Common myeloid progenitor, CD34-positive (primary cell): ENCODE measurements at regions of chr12 and their contacts with region 1.

Region 1: GRCh38 chr12:111396726-111397445 is 8.8 kb upstream of the SH2B3 start:
- DNase-seq: peak; percentile 90 to 94 (median 93)
- H3K4me3 ChIP-seq: peak overlapping the region in 6 of 7 experiments; percentile 26 to 67 (median 48)
- H3K27ac ChIP-seq: peak overlapping the region in 1 of 2 experiments; percentile 34
- H3K4me1 ChIP-seq: peaks cover 2 to 42% (median 31%) of the 10 kb centered on the region in 4 experiments
- H3K27me3 ChIP-seq: no peaks in the 10 kb centered on the region

Region 2: DNA sequence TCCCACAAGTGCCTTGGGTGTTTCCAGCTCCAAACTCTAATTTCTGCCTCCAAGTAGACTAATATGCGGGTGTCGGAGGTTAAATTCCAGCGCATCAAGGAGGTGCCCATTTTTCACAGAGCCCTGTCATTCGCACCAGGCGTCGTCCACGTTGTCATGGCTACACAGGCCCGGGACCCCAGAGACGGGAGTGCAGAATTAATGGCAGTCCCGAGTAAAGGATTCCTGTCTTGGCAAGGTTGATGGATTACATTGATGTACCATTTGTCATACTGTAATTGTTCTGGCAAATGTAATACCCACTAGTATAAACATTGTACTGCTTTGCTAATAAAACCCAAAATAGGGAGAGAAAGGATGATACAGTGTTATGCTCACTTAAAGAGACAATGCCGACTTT is 253.6 kb before region 1 on chr12:
- CTCF ChIA-PET with region 1: no interaction called
- POLR2A ChIA-PET with region 1: no interaction called
- DNase-seq: no peak
- H3K4me3 ChIP-seq: no peak overlapping the region
- H3K27ac ChIP-seq: no peak overlapping the region
- H3K4me1 ChIP-seq: no peaks in the 10 kb centered on the region
- H3K27me3 ChIP-seq: peaks cover 0 to 3% (median 0%) of the 10 kb centered on the region in 5 experiments

Region 3: GRCh38 chr12:111384596-111384995 is 12.3 kb before region 1 on chr12:
- CTCF ChIA-PET with region 1: interaction called, 29 read pairs
- POLR2A ChIA-PET with region 1: no interaction called
- DNase-seq: no peak
- H3K4me3 ChIP-seq: no peak overlapping the region
- H3K27ac ChIP-seq: no peak overlapping the region
- H3K4me1 ChIP-seq: no peaks in the 10 kb centered on the region
- H3K27me3 ChIP-seq: no peaks in the 10 kb centered on the region

Region 4: GRCh38 chr12:111434680-111435338 is 37.9 kb after region 1 on chr12:
- CTCF ChIA-PET with region 1: interaction called, 820 read pairs
- POLR2A ChIA-PET with region 1: interaction called, 5 read pairs
- DNase-seq: peak; percentile 74 to 96 (median 95)
- H3K4me3 ChIP-seq: peak overlapping the region in 4 of 7 experiments; percentile 13 to 59 (median 50)
- H3K27ac ChIP-seq: peak overlapping the region; percentile 41 to 83
- H3K4me1 ChIP-seq: peaks cover 26 to 99% (median 97%) of the 10 kb centered on the region in 4 experiments
- H3K27me3 ChIP-seq: no peaks in the 10 kb centered on the region

Region 5: GRCh38 chr12:111462210-111462769 is 65.4 kb after region 1 on chr12:
- CTCF ChIA-PET with region 1: interaction called, 820 read pairs
- POLR2A ChIA-PET with region 1: interaction called, 5 read pairs
- DNase-seq: peak in 2 of 3 donors; percentile 64 to 71
- H3K4me3 ChIP-seq: no peak overlapping the region
- H3K27ac ChIP-seq: peak overlapping the region in 1 of 2 experiments; percentile 30
- H3K4me1 ChIP-seq: peaks cover 0 to 21% (median 11%) of the 10 kb centered on the region in 4 experiments
- H3K27me3 ChIP-seq: no peaks in the 10 kb centered on the region

Region 6: DNA sequence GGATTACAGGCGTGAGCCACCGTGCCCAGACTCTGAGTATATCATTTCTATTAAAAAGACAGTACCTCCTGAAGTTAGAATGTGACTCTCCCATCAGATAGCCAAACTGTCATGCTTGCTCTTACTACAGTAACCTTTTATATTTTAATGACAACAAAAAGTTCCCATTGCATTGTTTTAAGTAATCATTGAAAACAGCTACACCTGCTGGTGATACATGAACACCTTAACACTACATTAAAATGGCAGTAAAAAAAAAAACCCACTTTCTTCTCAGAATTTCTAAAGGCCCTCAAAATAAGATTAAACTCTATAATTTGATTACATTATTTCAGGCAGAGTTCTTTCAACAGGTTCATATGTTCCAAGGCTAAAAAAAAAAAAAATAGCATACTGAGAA is 85.6 kb after region 1 on chr12:
- CTCF ChIA-PET with region 1: interaction called, 18 read pairs
- POLR2A ChIA-PET with region 1: no interaction called
- DNase-seq: peak; percentile 10 to 50 (median 42)
- H3K4me3 ChIP-seq: no peak overlapping the region
- H3K27ac ChIP-seq: no peak overlapping the region
- H3K4me1 ChIP-seq: peaks cover 0 to 2% (median 0%) of the 10 kb centered on the region in 4 experiments
- H3K27me3 ChIP-seq: no peaks in the 10 kb centered on the region